WTC11 (cell line): ENCODE measurements at regions of chrX and their contacts with region 1.

Region 1: DNA sequence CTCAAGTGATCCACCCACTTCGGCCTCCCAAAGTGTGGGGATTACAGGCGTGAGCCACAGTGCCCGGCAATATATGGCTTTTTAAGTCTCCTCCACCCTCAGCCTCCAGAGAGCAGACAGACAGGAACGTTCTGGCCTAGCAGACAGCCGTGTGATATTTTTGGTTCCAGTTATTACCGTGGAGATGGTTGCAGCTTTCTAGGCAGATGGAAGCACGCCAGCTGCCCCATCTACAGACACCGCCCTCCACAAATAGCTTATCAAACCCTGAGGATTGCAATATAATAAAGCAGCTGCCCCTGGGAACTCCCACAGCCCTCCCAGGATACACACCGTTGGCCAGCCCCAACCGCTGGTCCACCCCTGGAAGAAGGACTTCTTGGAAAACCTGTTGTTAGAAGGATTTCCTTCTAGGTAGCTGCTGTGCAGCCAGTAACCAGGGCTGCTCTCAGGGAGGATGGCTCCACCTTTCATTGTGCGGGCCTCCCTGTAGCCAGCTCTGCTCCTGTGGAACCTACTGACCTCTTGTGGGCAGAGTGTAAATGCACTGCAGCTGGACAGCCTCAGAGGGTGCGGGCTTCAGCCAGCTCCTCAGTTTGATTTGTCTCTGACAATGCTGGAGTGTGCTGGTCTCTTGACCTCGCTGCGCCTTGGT is 44.0 kb downstream of the SLC25A5 start:
- DNase-seq: peak; percentile 61
- ATAC-seq: peak; percentile 98
- H3K4me3 Mint-ChIP-seq: no peak overlapping the region
- H3K27ac Mint-ChIP-seq: no peak overlapping the region
- H3K4me1 Mint-ChIP-seq: no peaks in the 10 kb centered on the region
- H3K27me3 Mint-ChIP-seq: no peaks in the 10 kb centered on the region
- CTCF ChIP-seq: no peak

Region 2: GRCh38 chrX:119391279-119391678 is 121.0 kb before region 1 on chrX:
- CTCF ChIA-PET with region 1: interaction called, 11 read pairs
- POLR2A ChIA-PET with region 1: no interaction called
- DNase-seq: no peak
- ATAC-seq: peak; percentile 36; the same call in 1 of the 2 replicates
- H3K4me3 Mint-ChIP-seq: no peak overlapping the region
- H3K27ac Mint-ChIP-seq: no peak overlapping the region
- H3K4me1 Mint-ChIP-seq: peaks cover 10% of the 10 kb centered on the region
- H3K27me3 Mint-ChIP-seq: peaks cover 7% of the 10 kb centered on the region
- CTCF ChIP-seq: no peak

Region 3: GRCh38 chrX:119468930-119469635 is 43.2 kb before region 1 on chrX:
- CTCF ChIA-PET with region 1: interaction called, 15 read pairs
- POLR2A ChIA-PET with region 1: no interaction called
- DNase-seq: peak; percentile 85
- ATAC-seq: peak; percentile 65
- H3K4me3 Mint-ChIP-seq: peak overlapping the region; percentile 81
- H3K27ac Mint-ChIP-seq: peak overlapping the region; percentile 49; the same call in 1 of the 2 replicates
- H3K4me1 Mint-ChIP-seq: 0 out of 2 replicates have a peak, but pooled peaks cover 5% of the 10 kb centered on the region
- H3K27me3 Mint-ChIP-seq: no peaks in the 10 kb centered on the region
- CTCF ChIP-seq: peak; percentile 55

Region 4: DNA sequence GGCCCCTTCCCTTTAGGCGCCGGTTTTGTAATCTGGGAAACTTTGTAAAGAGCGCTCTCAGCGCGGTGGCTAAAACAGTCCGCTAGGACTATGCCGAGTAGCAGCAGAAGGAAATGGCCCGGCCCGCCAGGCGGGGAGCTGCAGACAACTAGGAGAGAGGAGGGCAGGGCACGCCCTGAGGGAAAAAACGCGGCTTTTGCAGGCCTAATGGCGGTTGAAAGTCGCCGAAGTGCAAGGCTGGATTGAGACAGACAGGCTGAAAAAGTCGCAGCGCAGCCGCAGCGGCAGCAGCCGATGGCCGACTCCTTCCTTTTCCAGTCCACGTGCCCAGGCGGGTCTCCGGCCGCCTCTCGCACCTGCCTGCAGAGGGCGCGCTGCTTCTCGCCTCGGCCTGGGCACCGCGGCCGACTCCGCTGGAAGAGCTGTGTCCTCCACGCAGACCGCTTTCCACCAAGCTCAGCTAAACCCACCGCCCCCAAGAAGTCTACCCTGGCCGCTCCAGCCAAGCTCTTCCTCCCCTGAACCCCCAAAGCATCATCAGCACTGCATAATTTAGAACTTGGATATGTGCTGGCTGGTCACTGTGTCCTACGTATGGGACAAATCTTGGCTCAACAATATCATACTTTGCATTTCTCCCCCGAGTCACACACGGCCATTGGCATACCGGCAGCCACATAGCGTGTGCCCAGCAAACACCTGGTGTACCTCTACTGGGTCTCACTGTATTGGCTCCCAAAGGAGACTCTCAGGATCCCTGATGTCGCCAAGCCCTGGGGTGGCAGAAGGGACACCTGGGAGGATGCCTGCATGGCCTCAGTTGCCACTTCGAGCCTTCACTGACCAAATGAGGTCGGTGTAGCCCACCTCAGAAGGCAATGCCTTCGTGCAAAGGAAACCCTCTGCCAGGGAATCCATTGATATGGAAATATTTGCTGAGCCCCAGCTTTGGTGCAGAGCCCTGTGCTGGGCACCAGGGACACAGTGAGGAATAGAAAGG is 29.5 kb before region 1 on chrX:
- CTCF ChIA-PET with region 1: interaction called, 36 read pairs
- POLR2A ChIA-PET with region 1: interaction called, 3 read pairs
- DNase-seq: peak; percentile 73
- ATAC-seq: peak; percentile 89
- H3K4me3 Mint-ChIP-seq: peak overlapping the region; percentile 63
- H3K27ac Mint-ChIP-seq: no peak overlapping the region
- H3K4me1 Mint-ChIP-seq: no peaks in the 10 kb centered on the region
- H3K27me3 Mint-ChIP-seq: peaks cover 17% of the 10 kb centered on the region
- CTCF ChIP-seq: peak; percentile 42

Region 5: DNA sequence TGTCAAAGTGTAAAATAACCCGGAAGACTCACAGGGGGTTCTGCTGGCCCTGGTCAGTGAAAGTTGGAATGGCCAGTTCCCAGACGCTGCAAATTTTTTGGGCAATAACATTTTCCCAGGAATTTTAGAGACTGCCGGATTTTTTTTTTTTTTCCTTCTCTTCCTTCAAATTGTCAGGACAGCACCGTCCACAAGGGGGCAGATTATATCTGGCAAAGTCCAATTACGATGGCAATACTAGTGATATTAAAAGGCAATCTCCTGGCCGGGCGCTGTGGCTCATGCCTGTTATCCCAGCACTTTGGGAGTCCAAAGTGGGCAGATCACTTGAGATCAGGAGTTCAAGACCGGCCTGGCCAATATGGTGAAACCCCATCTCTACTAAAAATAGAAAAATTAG is 23.5 kb before region 1 on chrX:
- CTCF ChIA-PET with region 1: interaction called, 36 read pairs
- POLR2A ChIA-PET with region 1: no interaction called
- DNase-seq: peak; percentile 36
- ATAC-seq: no peak
- H3K4me3 Mint-ChIP-seq: no peak overlapping the region
- H3K27ac Mint-ChIP-seq: no peak overlapping the region
- H3K4me1 Mint-ChIP-seq: no peaks in the 10 kb centered on the region
- H3K27me3 Mint-ChIP-seq: 0 out of 2 replicates have a peak, but pooled peaks cover under 1% of the 10 kb centered on the region
- CTCF ChIP-seq: peak; percentile 35